ENCODE measurements at regions of chr2 and their contacts with region 1.

Region 1: DNA sequence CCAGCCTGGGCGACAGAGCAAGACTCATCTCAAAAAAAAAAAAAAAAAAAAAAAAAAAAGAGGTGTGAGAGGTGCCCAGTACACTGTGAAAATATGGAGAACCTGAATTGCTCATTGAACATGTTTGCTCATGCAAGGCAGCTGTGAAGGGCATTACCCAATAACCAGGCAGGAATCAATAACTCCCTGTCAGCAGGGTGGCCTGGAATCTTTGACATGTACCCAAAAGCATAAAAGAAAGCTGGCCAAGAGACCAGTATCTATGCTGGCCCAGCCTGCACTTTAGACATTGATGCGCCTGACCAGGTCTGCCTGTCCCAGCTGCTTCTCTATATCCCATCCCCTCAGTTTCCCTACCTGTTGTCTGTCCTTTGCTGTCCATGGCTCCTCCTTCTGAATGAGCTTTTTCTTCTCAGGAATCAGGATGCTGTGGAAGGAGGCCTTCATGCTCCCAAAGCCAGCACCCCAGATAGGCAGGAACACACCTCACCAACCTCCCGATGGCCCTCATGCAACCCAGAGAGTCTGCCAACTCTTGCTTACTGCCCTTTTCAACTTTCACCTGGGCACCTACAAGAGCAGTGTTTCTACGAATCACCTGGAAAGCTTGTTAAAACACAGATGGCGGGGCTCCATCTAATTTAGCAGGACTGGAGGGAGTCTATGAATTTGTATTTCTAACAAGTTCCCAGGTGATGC is 83.4 kb upstream of the PPP1CB start:
- DNase-seq: no peak
- H3K4me3 ChIP-seq: no peak overlapping the region
- H3K27ac ChIP-seq: peak overlapping the region in 1 of 2 donors; percentile 61
- H3K4me1 ChIP-seq: peaks cover 0 to 9% of the 10 kb centered on the region in 2 donors
- H3K27me3 ChIP-seq: no peaks in the 10 kb centered on the region
- CTCF ChIP-seq: no peak
- POLR2A ChIP-seq: no peak

Region 2: GRCh38 chr2:27663463-27664249 is 1004.6 kb before region 1 on chr2 and contains the starts of genes SLC4A1AP and SUPT7L:
- intact Hi-C with region 1: no loop called
- DNase-seq: peak; percentile 43 to 57
- H3K4me3 ChIP-seq: peak within 1 kb of the TSS; percentile 76 to 95 (median 77)
- H3K27ac ChIP-seq: peak within 1 kb of the TSS; percentile 86 to 96
- H3K4me1 ChIP-seq: peaks cover 0 to 5% of the 10 kb centered on the region in 2 donors
- H3K27me3 ChIP-seq: no peaks in the 10 kb centered on the region
- CTCF ChIP-seq: no peak
- POLR2A ChIP-seq: no peak
- total RNA-seq, gene SLC4A1AP: 23.3 to 27.1 (median 24.3) TPM
- total RNA-seq, gene SUPT7L: 21.4 to 34.2 (median 25.9) TPM

Region 3: DNA sequence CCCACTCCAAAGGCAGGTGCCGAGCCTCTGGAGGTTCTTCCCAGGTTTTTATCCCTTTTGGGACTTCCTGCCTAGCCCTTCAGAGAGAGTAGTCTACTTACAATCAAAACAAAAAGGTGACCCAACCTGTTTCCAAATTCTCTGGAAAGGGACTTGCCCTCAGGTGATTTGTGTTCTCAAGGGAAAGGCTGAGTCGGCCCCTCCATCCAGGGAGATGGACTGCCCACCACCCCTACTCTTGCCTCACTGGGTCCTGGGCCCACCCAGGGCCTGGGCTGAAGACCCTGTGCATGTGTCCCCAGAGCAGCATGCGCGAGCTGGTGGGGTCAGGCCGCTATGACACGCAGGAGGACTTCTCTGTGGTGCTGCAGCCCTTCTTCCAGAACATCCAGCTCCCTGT is 63.9 kb before region 1 on chr2:
- intact Hi-C with region 1: loop called (anchors 2 kb)
- DNase-seq: no peak
- H3K4me3 ChIP-seq: no peak overlapping the region
- H3K27ac ChIP-seq: peak overlapping the region; percentile 18 to 60
- H3K4me1 ChIP-seq: no peaks in the 10 kb centered on the region
- H3K27me3 ChIP-seq: no peaks in the 10 kb centered on the region
- CTCF ChIP-seq: no peak
- POLR2A ChIP-seq: no peak

Region 4: GRCh38 chr2:29223851-29224694 is 555.8 kb after region 1 on chr2:
- intact Hi-C with region 1: no loop called
- DNase-seq: peak; percentile 46 to 62
- H3K4me3 ChIP-seq: no peak overlapping the region
- H3K27ac ChIP-seq: peak overlapping the region; percentile 37 to 55
- H3K4me1 ChIP-seq: no peaks in the 10 kb centered on the region
- H3K27me3 ChIP-seq: peaks cover 0 to 5% of the 10 kb centered on the region in 2 donors
- CTCF ChIP-seq: no peak
- POLR2A ChIP-seq: no peak

Region 5: GRCh38 chr2:29987146-29987545 is 1318.9 kb after region 1 on chr2:
- intact Hi-C with region 1: no loop called
- DNase-seq: no peak
- H3K4me3 ChIP-seq: no peak overlapping the region
- H3K27ac ChIP-seq: no peak overlapping the region
- H3K4me1 ChIP-seq: no peaks in the 10 kb centered on the region
- H3K27me3 ChIP-seq: no peaks in the 10 kb centered on the region
- CTCF ChIP-seq: no peak
- POLR2A ChIP-seq: no peak

Measured in breast epithelium (tissue), 4 donors.